ENCODE measurements at regions of chr14 and their contacts with region 1.

Region 1: DNA sequence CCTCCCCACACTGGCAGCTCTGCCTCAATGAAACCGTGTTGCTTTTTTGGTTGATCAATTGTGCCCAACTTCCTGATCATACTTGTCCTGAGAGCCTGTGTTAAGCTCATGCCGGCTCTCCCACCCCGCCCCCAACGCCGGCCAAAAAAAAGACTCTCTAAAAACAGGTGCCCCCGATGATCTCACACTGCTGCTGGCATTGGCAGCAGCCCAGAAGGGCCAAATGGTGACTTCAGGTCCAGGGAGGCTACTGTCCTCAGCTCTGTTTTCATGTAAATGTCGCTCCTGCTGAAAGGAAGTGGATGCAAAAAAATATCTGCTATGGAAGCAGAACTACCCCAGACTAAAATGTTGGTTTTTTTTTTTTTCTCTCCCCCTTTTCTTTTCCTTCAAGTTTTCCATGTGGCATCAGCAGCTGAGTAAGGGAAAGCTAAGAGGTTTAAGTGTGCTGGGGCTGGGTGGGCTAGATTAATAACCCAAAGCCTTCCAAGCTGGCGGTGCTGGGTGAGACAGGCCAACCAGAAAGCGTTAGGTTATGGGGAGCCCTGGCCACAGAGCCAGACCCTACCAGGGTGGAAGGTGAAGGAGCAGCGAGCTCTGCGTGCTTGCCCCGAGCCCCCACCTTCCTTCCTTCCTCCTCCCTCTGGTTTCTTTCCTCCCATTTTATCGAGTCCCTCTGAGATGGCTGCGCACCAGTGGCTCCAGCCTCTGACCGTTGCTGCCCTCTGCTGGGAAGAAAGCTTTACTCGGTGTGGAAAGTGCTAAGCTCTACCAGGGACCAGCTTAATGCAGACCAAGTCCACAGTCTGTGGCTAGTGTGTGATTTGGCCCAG is 396.1 kb downstream of the NRXN3 start:
- DNase-seq: peak; percentile 85
- H3K4me3 Mint-ChIP-seq: no peak overlapping the region
- H3K27ac Mint-ChIP-seq: no peak overlapping the region
- H3K4me1 Mint-ChIP-seq: peaks cover 2% of the 10 kb centered on the region
- H3K27me3 Mint-ChIP-seq: no peaks in the 10 kb centered on the region

Region 2: GRCh38 chr14:77660754-77661153 is 905.5 kb before region 1 on chr14:
- CTCF ChIA-PET with region 1: no interaction called
- intact Hi-C with region 1: loop called (anchors 5 kb)
- DNase-seq: no peak
- H3K4me3 Mint-ChIP-seq: no peak overlapping the region
- H3K27ac Mint-ChIP-seq: no peak overlapping the region
- H3K4me1 Mint-ChIP-seq: no peaks in the 10 kb centered on the region
- H3K27me3 Mint-ChIP-seq: no peaks in the 10 kb centered on the region

Region 3: GRCh38 chr14:78022059-78022458 is 544.2 kb before region 1 on chr14:
- CTCF ChIA-PET with region 1: interaction called, 10 read pairs
- intact Hi-C with region 1: loop called (anchors 1 kb)
- DNase-seq: peak; percentile 79
- H3K4me3 Mint-ChIP-seq: no peak overlapping the region
- H3K27ac Mint-ChIP-seq: no peak overlapping the region
- H3K4me1 Mint-ChIP-seq: no peaks in the 10 kb centered on the region
- H3K27me3 Mint-ChIP-seq: peaks cover 12% of the 10 kb centered on the region

Region 4: GRCh38 chr14:78448164-78449094 is 117.8 kb before region 1 on chr14:
- CTCF ChIA-PET with region 1: interaction called, 10 read pairs
- intact Hi-C with region 1: loop called (anchors 1 kb)
- DNase-seq: peak; percentile 68
- H3K4me3 Mint-ChIP-seq: no peak overlapping the region
- H3K27ac Mint-ChIP-seq: no peak overlapping the region
- H3K4me1 Mint-ChIP-seq: no peaks in the 10 kb centered on the region
- H3K27me3 Mint-ChIP-seq: no peaks in the 10 kb centered on the region

Region 5: GRCh38 chr14:78581229-78581628 is 15.0 kb after region 1 on chr14:
- CTCF ChIA-PET with region 1: interaction called, 13 read pairs
- intact Hi-C with region 1: no loop called
- DNase-seq: no peak
- H3K4me3 Mint-ChIP-seq: no peak overlapping the region
- H3K27ac Mint-ChIP-seq: no peak overlapping the region
- H3K4me1 Mint-ChIP-seq: no peaks in the 10 kb centered on the region
- H3K27me3 Mint-ChIP-seq: peaks cover 2% of the 10 kb centered on the region

Region 6: GRCh38 chr14:78598041-78598920 is 32.0 kb after region 1 on chr14:
- CTCF ChIA-PET with region 1: interaction called, 14 read pairs
- intact Hi-C with region 1: loop called (anchors 1 kb)
- DNase-seq: peak; percentile 69
- H3K4me3 Mint-ChIP-seq: no peak overlapping the region
- H3K27ac Mint-ChIP-seq: no peak overlapping the region
- H3K4me1 Mint-ChIP-seq: no peaks in the 10 kb centered on the region
- H3K27me3 Mint-ChIP-seq: peaks cover 20% of the 10 kb centered on the region

Region 7: DNA sequence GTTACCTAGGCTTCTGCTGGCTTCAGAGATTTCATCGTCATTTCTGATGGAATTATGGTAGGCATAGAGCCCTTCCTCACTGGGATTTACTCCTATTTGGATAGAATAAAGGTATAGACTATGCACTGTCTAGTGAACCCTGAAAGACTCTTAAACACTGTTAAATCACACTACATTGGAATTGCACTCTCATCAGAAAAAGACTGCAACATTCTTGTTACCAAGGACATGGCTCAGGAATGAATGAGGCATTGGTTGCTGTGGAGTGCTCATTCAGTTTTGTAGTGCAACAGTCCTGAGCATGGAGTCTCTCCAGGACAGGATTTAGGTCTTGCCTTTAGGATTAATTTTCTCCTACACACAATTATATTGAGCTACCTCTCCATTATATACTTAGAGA is 86.9 kb after region 1 on chr14:
- CTCF ChIA-PET with region 1: no interaction called
- intact Hi-C with region 1: no loop called
- DNase-seq: no peak
- H3K4me3 Mint-ChIP-seq: no peak overlapping the region
- H3K27ac Mint-ChIP-seq: no peak overlapping the region
- H3K4me1 Mint-ChIP-seq: no peaks in the 10 kb centered on the region
- H3K27me3 Mint-ChIP-seq: peaks cover 12% of the 10 kb centered on the region

Region 8: DNA sequence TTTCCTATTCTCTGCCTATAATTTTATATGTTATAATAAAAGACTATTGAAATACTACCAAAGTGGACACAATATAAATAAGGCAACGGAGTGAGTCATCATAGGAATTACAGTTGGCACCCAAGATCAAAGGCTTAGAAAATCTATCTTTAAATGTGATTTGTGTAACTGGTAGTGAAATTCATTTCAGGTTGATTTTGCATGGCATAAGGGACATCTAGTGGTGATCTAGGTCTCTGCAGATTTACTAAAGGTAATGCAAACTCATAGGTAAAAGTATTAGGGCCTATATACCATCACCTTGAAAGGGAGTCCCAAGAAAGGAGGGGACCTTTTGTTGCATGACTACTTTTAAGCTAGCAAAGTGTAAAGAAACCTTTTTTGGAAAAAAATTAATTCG is 131.1 kb after region 1 on chr14:
- CTCF ChIA-PET with region 1: interaction called, 3 read pairs
- intact Hi-C with region 1: loop called (anchors 5 kb)
- DNase-seq: no peak
- H3K4me3 Mint-ChIP-seq: no peak overlapping the region
- H3K27ac Mint-ChIP-seq: no peak overlapping the region
- H3K4me1 Mint-ChIP-seq: no peaks in the 10 kb centered on the region
- H3K27me3 Mint-ChIP-seq: no peaks in the 10 kb centered on the region